ENCODE measurements at regions of chr7 and their contacts with region 1.

Region 1: GRCh38 chr7:26151953-26152781 is at the start of gene NFE2L3:
- DNase-seq: peak; percentile 80 to 84 (median 81)
- H3K4me3 ChIP-seq: peak within 1 kb of the TSS; percentile 89 to 93
- H3K4me3 Mint-ChIP-seq: peak within 1 kb of the TSS; percentile 91 to 99 (median 96)
- H3K27ac ChIP-seq: peak within 1 kb of the TSS; percentile 79
- H3K27ac Mint-ChIP-seq: peak within 1 kb of the TSS; percentile 94 to 98 (median 96)
- H3K4me1 ChIP-seq: peaks cover 52% of the 10 kb centered on the region
- H3K4me1 Mint-ChIP-seq: peaks cover 42 to 56% (median 49%) of the 10 kb centered on the region in 4 donors
- H3K27me3 ChIP-seq: no peaks in the 10 kb centered on the region
- H3K27me3 Mint-ChIP-seq: no peaks in the 10 kb centered on the region
- total RNA-seq, gene NFE2L3: 7.5 to 7.9 TPM

Region 2: GRCh38 chr7:25951031-25951948 is 200.9 kb before region 1 on chr7:
- CTCF ChIA-PET with region 1: no interaction called
- POLR2A ChIA-PET with region 1: no interaction called
- intact Hi-C with region 1: loop called (anchors 2 kb)
- DNase-seq: peak; percentile 84 to 94 (median 88)
- H3K4me3 ChIP-seq: peak overlapping the region in 1 of 2 donors; percentile 69
- H3K4me3 Mint-ChIP-seq: peak overlapping the region; percentile 91 to 93 (median 92)
- H3K27ac ChIP-seq: peak overlapping the region; percentile 25
- H3K27ac Mint-ChIP-seq: peak overlapping the region; percentile 69 to 89 (median 84)
- H3K4me1 ChIP-seq: peaks cover 14% of the 10 kb centered on the region
- H3K4me1 Mint-ChIP-seq: peaks cover 6 to 27% (median 17%) of the 10 kb centered on the region in 4 donors
- H3K27me3 ChIP-seq: no peaks in the 10 kb centered on the region
- H3K27me3 Mint-ChIP-seq: no peaks in the 10 kb centered on the region

Region 3: DNA sequence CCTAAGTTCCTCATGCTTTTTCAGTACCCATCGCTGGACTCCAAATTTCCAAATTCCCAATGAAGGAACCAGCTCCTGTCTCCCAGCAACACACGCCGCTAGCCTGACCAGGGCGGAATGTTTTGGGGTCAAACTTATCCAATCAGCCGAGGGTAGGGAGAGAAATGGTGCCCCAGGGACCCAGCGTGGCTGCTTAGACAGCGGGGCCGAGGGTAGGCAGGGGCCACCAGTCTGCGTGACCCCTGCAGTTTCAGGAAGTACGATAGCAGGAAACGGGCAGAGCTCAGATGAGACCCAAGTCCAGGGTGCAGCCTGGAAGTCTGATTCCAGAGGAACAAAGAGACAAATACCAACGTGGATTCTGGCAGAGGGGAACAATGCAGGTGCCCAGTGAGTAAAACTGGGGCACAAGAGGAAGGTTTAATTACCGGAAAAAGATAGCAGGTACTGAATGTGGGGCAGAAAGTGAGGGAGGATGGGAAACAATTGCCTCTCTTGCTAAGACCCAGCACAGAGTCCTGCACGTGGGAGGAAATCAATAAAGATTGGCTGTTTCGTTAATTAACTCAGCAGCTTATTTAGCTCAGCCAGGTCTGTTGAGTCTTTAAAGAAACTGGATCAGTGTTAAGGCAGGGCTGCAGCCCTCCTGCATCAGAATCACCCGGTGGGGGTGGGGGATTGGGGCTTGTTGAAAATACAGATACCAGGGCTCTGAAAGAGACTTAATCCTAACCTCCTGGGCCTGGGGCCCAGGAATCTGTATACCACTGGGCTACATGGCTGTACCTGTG is 50.6 kb before region 1 on chr7:
- CTCF ChIA-PET with region 1: no interaction called
- POLR2A ChIA-PET with region 1: interaction called, 19 read pairs
- intact Hi-C with region 1: no loop called
- DNase-seq: no peak
- H3K4me3 ChIP-seq: no peak overlapping the region
- H3K4me3 Mint-ChIP-seq: peak overlapping the region in 7 of 8 donors; percentile 16 to 67 (median 46)
- H3K27ac ChIP-seq: no peak overlapping the region
- H3K27ac Mint-ChIP-seq: peak overlapping the region in 3 of 7 donors; percentile 28 to 57 (median 48)
- H3K4me1 ChIP-seq: peaks cover 38% of the 10 kb centered on the region
- H3K4me1 Mint-ChIP-seq: peaks cover 9 to 45% (median 27%) of the 10 kb centered on the region in 4 donors
- H3K27me3 ChIP-seq: no peaks in the 10 kb centered on the region
- H3K27me3 Mint-ChIP-seq: no peaks in the 10 kb centered on the region

Region 4: GRCh38 chr7:26167301-26167934 is 15.3 kb after region 1 on chr7:
- CTCF ChIA-PET with region 1: interaction called, 9 read pairs
- POLR2A ChIA-PET with region 1: interaction called, 23 read pairs
- intact Hi-C with region 1: loop called (anchors 1 kb)
- DNase-seq: peak in 2 of 5 donors; percentile 33 to 70
- H3K4me3 ChIP-seq: no peak overlapping the region
- H3K4me3 Mint-ChIP-seq: peak overlapping the region in 6 of 8 donors; percentile 11 to 70 (median 40)
- H3K27ac ChIP-seq: peak overlapping the region; percentile 39
- H3K27ac Mint-ChIP-seq: peak overlapping the region; percentile 44 to 94 (median 85)
- H3K4me1 ChIP-seq: peaks cover 20% of the 10 kb centered on the region
- H3K4me1 Mint-ChIP-seq: peaks cover 14 to 29% (median 23%) of the 10 kb centered on the region in 4 donors
- H3K27me3 ChIP-seq: no peaks in the 10 kb centered on the region
- H3K27me3 Mint-ChIP-seq: no peaks in the 10 kb centered on the region

Region 5: GRCh38 chr7:26180792-26181198 is 28.6 kb after region 1 on chr7:
- CTCF ChIA-PET with region 1: interaction called, 4 read pairs
- POLR2A ChIA-PET with region 1: interaction called, 19 read pairs
- intact Hi-C with region 1: no loop called
- DNase-seq: no peak
- H3K4me3 ChIP-seq: no peak overlapping the region
- H3K4me3 Mint-ChIP-seq: no peak overlapping the region
- H3K27ac ChIP-seq: no peak overlapping the region
- H3K27ac Mint-ChIP-seq: peak overlapping the region in 4 of 7 donors; percentile 1 to 81 (median 20)
- H3K4me1 ChIP-seq: peaks cover 34% of the 10 kb centered on the region
- H3K4me1 Mint-ChIP-seq: peaks cover 31 to 68% (median 44%) of the 10 kb centered on the region in 4 donors
- H3K27me3 ChIP-seq: no peaks in the 10 kb centered on the region
- H3K27me3 Mint-ChIP-seq: no peaks in the 10 kb centered on the region

Region 6: DNA sequence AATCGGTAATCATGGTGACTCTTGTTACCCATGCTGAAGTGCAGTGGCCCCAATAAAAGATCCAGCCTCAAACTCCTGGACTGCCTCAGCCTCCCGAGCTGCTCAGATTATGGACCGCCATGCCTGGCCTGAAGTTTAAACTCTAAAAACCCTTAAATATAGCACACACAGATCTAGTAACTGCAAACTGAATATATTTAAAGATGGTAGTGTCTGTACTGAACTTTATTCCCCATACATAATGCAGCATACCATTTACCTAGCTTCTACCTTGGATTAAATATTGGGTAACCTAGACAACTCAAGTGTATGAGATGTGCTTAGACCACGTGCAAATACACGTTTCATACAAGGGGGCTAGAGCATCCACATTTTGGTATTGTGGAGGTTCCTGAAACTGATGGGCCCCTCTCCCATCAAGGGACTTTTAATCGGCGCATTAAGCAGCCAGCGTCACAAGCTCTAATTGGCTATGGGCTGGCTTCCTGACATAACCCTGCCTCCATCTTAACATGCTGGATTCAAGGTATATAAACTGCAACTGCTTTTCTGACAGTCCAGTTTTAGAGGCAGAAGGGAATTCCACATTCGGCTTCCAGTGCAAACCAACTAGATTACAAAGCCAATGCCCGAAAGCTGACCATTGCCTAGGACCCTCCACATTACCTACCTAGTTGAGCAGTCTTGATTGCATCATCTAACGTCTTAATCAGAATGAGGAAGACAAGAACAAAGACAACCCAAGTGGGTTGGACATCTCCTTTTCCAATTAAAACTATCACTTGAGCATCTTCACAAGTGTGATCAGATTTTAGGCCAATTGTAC is 35.4 kb after region 1 on chr7:
- CTCF ChIA-PET with region 1: interaction called, 4 read pairs
- POLR2A ChIA-PET with region 1: interaction called, 223 read pairs
- intact Hi-C with region 1: no loop called
- DNase-seq: no peak
- H3K4me3 ChIP-seq: no peak overlapping the region
- H3K4me3 Mint-ChIP-seq: peak overlapping the region in 3 of 8 donors; percentile 7 to 55 (median 17)
- H3K27ac ChIP-seq: no peak overlapping the region
- H3K27ac Mint-ChIP-seq: peak overlapping the region; percentile 52 to 99 (median 75)
- H3K4me1 ChIP-seq: peaks cover 74% of the 10 kb centered on the region
- H3K4me1 Mint-ChIP-seq: peaks cover 51 to 90% (median 74%) of the 10 kb centered on the region in 4 donors
- H3K27me3 ChIP-seq: no peaks in the 10 kb centered on the region
- H3K27me3 Mint-ChIP-seq: no peaks in the 10 kb centered on the region

Region 7: GRCh38 chr7:26233902-26234511 is 81.8 kb after region 1 on chr7:
- CTCF ChIA-PET with region 1: no interaction called
- POLR2A ChIA-PET with region 1: no interaction called
- intact Hi-C with region 1: no loop called
- DNase-seq: no peak
- H3K4me3 ChIP-seq: no peak overlapping the region
- H3K4me3 Mint-ChIP-seq: no peak overlapping the region
- H3K27ac ChIP-seq: no peak overlapping the region
- H3K27ac Mint-ChIP-seq: no peak overlapping the region
- H3K4me1 ChIP-seq: no peaks in the 10 kb centered on the region
- H3K4me1 Mint-ChIP-seq: no peaks in the 10 kb centered on the region
- H3K27me3 ChIP-seq: no peaks in the 10 kb centered on the region
- H3K27me3 Mint-ChIP-seq: no peaks in the 10 kb centered on the region

Measured in CD4-positive, alpha-beta memory T cell (primary cell).